Body of pancreas (tissue), 4 donors: ENCODE measurements at regions of chr5 and their contacts with region 1.

Region 1: GRCh38 chr5:128905571-128906110 is 59.6 kb upstream of the SLC27A6 start:
- DNase-seq: peak; percentile 30 to 43 (median 38)
- ATAC-seq: peak; percentile 75
- H3K4me3 ChIP-seq: no peak overlapping the region
- H3K27ac ChIP-seq: no peak overlapping the region
- H3K4me1 ChIP-seq: no peaks in the 10 kb centered on the region
- H3K27me3 ChIP-seq: no peaks in the 10 kb centered on the region
- CTCF ChIP-seq: peak; percentile 70 to 79 (median 74)
- POLR2A ChIP-seq: no peak

Region 2: DNA sequence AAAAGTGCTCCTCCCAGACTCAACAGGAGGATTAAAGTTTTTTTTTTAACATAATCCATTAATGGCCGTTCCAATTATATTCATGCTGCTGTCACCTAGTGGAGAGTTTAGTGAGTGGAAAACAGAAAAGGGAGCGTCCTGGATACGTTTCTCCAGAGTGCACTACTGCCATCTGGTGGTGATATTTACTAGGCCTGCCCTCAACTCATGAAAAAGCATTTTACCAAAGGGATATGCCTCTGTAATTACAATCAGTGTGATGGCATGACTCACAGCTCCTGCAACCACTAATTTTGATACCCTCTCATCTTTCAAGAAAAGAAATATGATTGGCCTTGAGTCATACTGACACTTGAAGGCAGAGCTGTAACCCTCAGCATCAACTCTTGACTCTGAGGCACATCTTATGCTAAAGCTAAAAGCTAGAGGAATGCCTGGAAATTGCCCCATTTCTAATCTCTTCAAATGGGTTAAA is 862.3 kb after region 1 on chr5:
- intact Hi-C with region 1: loop called (anchors 10 kb)
- DNase-seq: peak; percentile 75 to 85 (median 78)
- ATAC-seq: peak; percentile 95
- H3K4me3 ChIP-seq: no peak overlapping the region
- H3K27ac ChIP-seq: no peak overlapping the region
- H3K4me1 ChIP-seq: no peaks in the 10 kb centered on the region
- H3K27me3 ChIP-seq: no peaks in the 10 kb centered on the region
- CTCF ChIP-seq: peak; percentile 90 to 99 (median 99)
- POLR2A ChIP-seq: no peak